ENCODE measurements at regions of chr6 and their contacts with region 1.

Region 1: GRCh38 chr6:50816115-50816675 is 2.5 kb upstream of the TFAP2B start:
- DNase-seq: peak; percentile 75
- H3K4me3 Mint-ChIP-seq: peak overlapping the region; percentile 80
- H3K27ac Mint-ChIP-seq: no peak overlapping the region
- H3K4me1 Mint-ChIP-seq: peaks cover 18% of the 10 kb centered on the region
- H3K27me3 Mint-ChIP-seq: peaks cover 69% of the 10 kb centered on the region
- CTCF ChIP-seq: peak; percentile 70

Region 2: DNA sequence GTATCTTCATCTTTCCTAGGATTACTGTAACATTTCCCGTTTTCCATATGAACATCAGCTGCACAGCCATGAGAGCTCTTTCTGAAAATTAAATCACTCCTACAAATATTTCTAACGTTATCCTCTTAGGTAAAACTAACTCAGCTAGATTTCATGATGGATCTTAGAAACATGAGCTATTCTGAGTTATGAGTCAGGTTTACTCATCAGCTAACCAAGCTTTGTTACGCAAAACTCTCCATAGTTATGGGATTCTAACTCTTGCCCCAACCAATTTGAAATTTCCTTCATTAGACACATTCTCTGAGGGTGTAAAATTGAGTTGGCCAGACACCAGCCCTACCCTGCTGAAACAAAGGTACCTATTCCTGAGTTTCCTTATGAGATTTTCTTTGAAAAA is 808.4 kb before region 1 on chr6:
- CTCF ChIA-PET with region 1: interaction called, 12 read pairs
- intact Hi-C with region 1: no loop called
- DNase-seq: no peak
- H3K4me3 Mint-ChIP-seq: no peak overlapping the region
- H3K27ac Mint-ChIP-seq: peak overlapping the region; percentile 55
- H3K4me1 Mint-ChIP-seq: peaks cover 13% of the 10 kb centered on the region
- H3K27me3 Mint-ChIP-seq: no peaks in the 10 kb centered on the region
- CTCF ChIP-seq: no peak

Region 3: GRCh38 chr6:50785921-50786320 is 30.3 kb before region 1 on chr6:
- CTCF ChIA-PET with region 1: no interaction called
- intact Hi-C with region 1: no loop called
- DNase-seq: no peak
- H3K4me3 Mint-ChIP-seq: no peak overlapping the region
- H3K27ac Mint-ChIP-seq: no peak overlapping the region
- H3K4me1 Mint-ChIP-seq: no peaks in the 10 kb centered on the region
- H3K27me3 Mint-ChIP-seq: no peaks in the 10 kb centered on the region
- CTCF ChIP-seq: no peak

Region 4: DNA sequence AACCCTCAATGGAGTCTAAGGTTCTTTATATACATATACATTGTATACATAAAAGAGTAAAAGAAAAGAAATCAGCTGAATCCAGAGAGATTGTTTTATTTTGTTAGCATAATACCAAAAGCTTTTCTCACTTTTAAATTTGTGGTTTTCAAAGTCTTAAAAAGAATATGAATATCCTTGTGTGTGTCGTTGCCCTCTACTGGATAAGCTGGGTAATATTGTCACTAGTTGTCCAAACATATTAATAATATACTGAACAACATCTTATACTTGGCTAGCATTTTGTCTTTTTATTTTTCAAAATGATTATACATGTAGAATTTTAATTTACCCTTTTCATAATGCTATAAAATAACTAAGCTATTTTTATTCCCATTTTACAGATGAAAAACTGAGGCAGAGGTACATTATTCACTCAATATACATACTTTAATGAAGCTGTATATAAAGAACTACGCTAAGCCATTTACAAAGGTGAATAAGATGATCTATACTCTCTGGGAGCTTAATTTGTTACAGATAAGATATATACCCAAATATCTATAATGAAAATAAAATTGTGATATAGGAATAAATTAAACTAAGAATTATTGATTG is 534.2 kb after region 1 on chr6:
- CTCF ChIA-PET with region 1: interaction called, 3 read pairs
- intact Hi-C with region 1: loop called (anchors 1 kb)
- DNase-seq: no peak
- H3K4me3 Mint-ChIP-seq: no peak overlapping the region
- H3K27ac Mint-ChIP-seq: no peak overlapping the region
- H3K4me1 Mint-ChIP-seq: no peaks in the 10 kb centered on the region
- H3K27me3 Mint-ChIP-seq: peaks cover 23% of the 10 kb centered on the region
- CTCF ChIP-seq: peak; percentile 27

Region 5: DNA sequence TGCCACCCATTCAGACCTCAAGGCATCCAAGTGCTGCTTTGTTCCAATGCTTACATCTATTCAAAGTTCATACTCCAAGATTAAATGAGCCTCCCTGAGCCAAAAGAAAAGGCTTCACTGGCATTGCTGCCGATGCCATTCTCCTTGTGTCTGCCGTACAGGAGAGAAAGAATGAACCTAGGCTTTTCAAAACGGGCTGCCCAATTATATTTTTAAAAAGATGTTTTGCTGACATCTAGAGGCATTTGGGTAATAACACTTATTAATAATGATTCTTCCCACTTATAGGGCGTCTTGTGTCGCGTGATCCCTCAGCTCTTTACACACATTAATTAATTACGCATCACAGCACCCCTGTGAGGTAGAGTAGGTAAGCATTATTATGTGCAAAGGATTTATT is 725.7 kb after region 1 on chr6:
- CTCF ChIA-PET with region 1: interaction called, 3 read pairs
- intact Hi-C with region 1: loop called (anchors 1 kb)
- DNase-seq: no peak
- H3K4me3 Mint-ChIP-seq: no peak overlapping the region
- H3K27ac Mint-ChIP-seq: no peak overlapping the region
- H3K4me1 Mint-ChIP-seq: peaks cover 8% of the 10 kb centered on the region
- H3K27me3 Mint-ChIP-seq: peaks cover 36% of the 10 kb centered on the region
- CTCF ChIP-seq: no peak

Region 6: DNA sequence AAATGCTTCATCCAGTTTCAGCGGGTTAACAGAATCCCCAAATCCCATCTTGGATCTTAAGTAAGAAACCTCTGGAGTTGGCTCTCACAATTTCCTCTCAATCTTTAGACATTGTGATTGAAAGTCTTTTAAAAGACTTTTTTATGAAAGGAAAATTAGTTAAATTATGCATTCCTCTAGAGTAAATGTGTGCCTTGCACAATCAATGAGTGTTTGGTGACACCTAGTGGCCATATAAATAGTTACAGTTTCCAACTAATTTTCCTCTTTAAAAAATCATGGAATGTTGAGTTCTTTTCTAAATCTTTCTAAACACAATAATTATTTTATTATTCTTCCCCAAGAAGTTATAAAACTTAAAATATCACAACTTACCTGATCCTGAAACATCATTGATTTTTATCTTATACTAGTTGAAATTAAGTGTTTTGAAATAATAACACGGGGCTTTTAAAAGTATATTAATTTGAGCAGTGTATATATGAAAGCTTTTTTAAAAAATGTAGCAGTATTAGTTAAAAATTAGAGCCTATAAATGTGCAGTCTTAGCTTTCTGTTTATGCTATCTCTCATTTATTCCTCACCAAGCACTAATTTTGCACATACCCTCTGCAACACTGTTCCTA is 1204.9 kb after region 1 on chr6:
- CTCF ChIA-PET with region 1: no interaction called
- intact Hi-C with region 1: loop called (anchors 10 kb)
- DNase-seq: no peak
- H3K4me3 Mint-ChIP-seq: no peak overlapping the region
- H3K27ac Mint-ChIP-seq: no peak overlapping the region
- H3K4me1 Mint-ChIP-seq: no peaks in the 10 kb centered on the region
- H3K27me3 Mint-ChIP-seq: no peaks in the 10 kb centered on the region
- CTCF ChIP-seq: peak; percentile 55